ENCODE measurements at regions of chr21 and their contacts with region 1.

Region 1: DNA sequence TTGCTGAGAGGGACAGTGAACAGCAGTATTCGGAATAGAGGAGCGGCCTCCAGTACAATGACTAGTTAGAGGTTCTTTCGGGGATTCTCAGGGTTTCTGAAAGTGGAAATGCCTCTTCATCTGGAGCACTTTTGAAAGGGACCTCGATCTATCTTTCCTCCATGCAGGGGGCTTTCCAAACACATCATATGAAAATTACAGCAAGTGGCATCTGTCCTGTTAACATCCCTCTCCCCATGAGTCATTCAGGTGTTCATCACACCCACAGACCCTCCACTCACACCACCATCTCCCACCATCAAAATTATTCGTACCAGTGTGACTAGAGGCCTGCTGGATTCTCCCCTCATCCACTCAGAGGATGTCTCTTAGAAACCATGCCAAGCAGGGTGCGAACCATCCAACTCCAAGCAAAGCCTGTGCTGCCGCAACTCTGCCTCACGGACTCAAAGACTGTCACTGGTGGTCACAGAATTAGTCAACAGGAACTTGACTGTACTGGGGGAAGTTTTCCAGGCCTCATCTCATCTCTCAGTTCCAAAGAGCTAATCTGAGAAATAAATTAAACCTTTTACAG is 211.1 kb downstream of the MRPL39 start:
- DNase-seq: peak; percentile 84
- H3K4me3 Mint-ChIP-seq: peak overlapping the region; percentile 49
- H3K27ac Mint-ChIP-seq: peak overlapping the region; percentile 86
- H3K4me1 Mint-ChIP-seq: peaks cover 23% of the 10 kb centered on the region
- H3K27me3 Mint-ChIP-seq: peaks cover 2% of the 10 kb centered on the region

Region 2: GRCh38 chr21:25313829-25314228 is 82.4 kb before region 1 on chr21:
- intact Hi-C with region 1: no loop called
- DNase-seq: no peak
- H3K4me3 Mint-ChIP-seq: no peak overlapping the region
- H3K27ac Mint-ChIP-seq: no peak overlapping the region
- H3K4me1 Mint-ChIP-seq: no peaks in the 10 kb centered on the region
- H3K27me3 Mint-ChIP-seq: no peaks in the 10 kb centered on the region

Region 3: GRCh38 chr21:25421327-25422028 is 25.3 kb after region 1 on chr21:
- intact Hi-C with region 1: loop called (anchors 1 kb)
- DNase-seq: peak; percentile 89
- H3K4me3 Mint-ChIP-seq: peak overlapping the region; percentile 70
- H3K27ac Mint-ChIP-seq: peak overlapping the region; percentile 93
- H3K4me1 Mint-ChIP-seq: peaks cover 39% of the 10 kb centered on the region
- H3K27me3 Mint-ChIP-seq: no peaks in the 10 kb centered on the region

Region 4: DNA sequence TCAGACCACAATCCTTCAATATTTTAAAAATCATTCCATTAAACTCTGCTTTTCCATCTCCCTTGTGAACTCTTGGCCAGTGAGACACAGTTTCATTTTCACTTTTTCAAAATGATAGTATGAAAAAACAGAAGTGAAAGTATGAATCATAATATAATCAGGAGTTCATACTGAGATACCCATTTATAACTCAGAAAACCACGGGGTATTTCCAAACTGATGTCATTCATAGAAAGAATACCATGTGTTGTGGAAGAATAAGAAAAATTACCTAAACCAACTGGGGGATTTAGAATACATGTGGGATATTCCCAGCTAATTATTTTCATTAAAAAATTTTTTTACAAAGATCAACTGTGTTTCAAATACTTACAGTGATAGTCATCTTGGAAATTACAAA is 61.2 kb after region 1 on chr21:
- intact Hi-C with region 1: loop called (anchors 1 kb)
- DNase-seq: peak; percentile 67
- H3K4me3 Mint-ChIP-seq: peak overlapping the region; percentile 60
- H3K27ac Mint-ChIP-seq: peak overlapping the region; percentile 79
- H3K4me1 Mint-ChIP-seq: peaks cover 50% of the 10 kb centered on the region
- H3K27me3 Mint-ChIP-seq: no peaks in the 10 kb centered on the region

Region 5: DNA sequence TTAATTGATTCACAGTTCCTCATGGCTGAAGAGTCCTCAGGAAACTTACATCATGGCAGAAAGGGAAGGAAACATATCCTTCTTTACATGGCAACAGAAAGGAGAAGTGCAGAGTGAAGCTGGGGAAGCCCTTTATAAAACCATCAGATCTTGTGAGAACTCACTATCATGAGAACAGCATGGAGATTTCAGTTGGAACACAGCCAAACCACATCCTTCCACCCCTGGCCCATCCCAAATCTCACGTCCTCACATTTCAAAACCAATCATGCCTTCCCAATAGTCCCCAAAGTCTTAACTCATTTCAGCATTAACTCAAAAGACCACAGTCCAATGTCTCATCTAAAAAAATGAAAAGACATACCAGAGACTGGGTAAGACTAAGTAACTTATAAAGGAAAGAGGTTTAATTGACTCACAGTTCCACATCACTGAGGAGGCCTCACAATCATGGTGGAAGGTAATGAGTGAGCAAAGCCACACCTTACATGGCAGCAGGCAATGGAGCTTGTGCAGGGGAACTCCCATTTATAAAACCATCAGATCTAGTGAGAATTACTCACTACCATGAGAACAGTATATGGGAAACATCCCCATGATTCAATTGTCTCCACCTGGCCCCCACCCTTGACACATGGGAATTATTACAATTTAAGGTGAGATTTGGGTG is 105.9 kb after region 1 on chr21:
- intact Hi-C with region 1: loop called (anchors 1 kb)
- DNase-seq: peak; percentile 67
- H3K4me3 Mint-ChIP-seq: peak overlapping the region; percentile 52
- H3K27ac Mint-ChIP-seq: peak overlapping the region; percentile 96
- H3K4me1 Mint-ChIP-seq: peaks cover 39% of the 10 kb centered on the region
- H3K27me3 Mint-ChIP-seq: no peaks in the 10 kb centered on the region

Region 6: GRCh38 chr21:25561668-25562641 is 165.7 kb after region 1 on chr21:
- intact Hi-C with region 1: loop called (anchors 1 kb)
- DNase-seq: peak; percentile 92
- H3K4me3 Mint-ChIP-seq: peak overlapping the region; percentile 90
- H3K27ac Mint-ChIP-seq: peak overlapping the region; percentile 99
- H3K4me1 Mint-ChIP-seq: peaks cover 54% of the 10 kb centered on the region
- H3K27me3 Mint-ChIP-seq: peaks cover 2% of the 10 kb centered on the region